ENCODE measurements at regions of chr10 and their contacts with region 1.

Region 1: DNA sequence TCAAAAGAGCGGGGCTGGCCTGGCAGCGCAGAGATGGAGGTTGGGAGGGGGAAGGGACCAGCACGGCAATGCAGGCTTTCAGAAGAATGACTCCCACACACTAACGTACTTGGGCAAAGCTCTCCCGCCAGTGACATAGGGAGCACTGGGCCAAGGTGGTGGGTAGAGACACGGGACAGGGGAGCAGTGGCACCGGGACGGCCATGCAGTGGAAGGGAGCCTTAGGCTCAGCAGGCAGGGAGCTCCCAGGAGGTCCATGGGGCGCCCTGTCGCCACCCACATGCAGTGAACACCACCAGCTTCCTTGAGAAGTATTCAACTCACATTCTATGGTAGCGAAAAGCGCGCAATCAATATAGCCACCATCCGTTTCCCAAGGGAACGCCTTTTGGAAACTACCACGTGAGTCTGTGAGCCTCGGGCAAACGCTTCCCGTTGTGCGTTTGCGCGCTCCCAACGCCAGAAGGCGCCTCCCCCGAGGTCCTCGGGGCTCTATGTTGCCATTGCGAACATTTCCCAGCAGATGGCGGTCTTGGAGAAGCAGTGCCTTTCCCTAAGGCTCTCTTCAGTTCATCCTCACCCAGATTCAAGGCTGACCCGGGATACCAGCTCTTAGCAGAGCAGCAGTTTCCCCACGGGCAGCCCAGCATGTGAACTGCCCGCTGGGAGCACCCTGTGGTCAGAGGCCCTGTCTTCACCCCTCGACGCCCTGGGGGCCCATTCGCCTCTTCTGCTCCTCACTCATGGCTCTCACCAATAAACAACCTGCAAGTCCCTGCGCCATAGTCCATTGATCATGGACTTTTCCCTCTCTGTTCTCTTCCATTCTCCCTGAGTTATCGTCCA is 16.4 kb upstream of the OPALIN start:
- DNase-seq: peak; percentile 86 to 90
- H3K4me3 ChIP-seq: peak overlapping the region in 1 of 3 donors; percentile 32
- H3K27ac ChIP-seq: no peak overlapping the region
- H3K4me1 ChIP-seq: peaks cover 0 to 5% of the 10 kb centered on the region in 2 donors
- H3K27me3 ChIP-seq: no peaks in the 10 kb centered on the region
- CTCF ChIP-seq: peak; percentile 68 to 99 (median 96)
- POLR2A ChIP-seq: no peak

Region 2: DNA sequence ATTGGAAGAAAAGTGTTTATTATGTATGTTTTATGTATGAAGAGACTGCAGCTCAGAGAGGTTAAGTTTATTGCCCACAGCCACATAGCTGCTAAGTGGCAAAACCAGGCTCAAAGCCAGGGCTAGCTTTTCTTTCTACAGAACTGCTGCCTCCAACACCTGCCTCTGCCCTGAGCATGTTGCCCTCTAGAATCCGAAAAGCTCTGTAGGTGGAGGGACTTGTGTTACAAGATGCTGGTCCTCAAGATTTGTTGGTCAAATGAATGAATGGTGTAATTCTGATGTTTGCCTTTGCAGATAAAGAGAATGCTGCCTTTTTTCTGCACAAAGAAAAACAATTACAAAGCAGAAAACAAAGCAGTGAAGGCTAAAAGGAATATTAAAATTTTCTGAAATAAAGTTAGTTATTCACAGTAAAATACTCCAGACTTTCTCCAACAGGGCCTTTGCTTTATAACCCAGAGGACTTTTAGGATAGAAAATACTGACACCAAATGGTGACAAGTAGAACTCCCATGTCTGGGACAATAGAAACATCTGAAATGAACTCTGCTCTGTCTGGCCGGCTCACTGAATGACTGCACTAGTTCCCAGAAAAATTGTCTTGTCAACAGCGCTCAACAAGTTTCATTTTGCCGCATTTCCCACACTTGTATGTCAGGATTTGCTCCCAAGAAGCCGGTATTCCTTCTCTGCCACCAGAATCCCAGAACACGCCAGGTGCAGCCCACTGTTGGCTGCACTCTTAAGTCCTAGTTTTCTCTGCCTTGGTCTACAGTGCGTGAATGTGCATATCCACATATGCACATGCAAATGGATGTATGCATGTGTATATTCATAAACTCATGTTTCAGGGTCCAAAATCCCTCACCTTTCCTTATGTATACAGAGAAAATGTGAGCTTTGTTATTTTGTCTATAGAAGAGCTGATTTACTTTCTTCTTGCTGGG is 82.0 kb before region 1 on chr10:
- intact Hi-C with region 1: no loop called
- DNase-seq: peak in 1 of 2 donors; percentile 31
- H3K4me3 ChIP-seq: no peak overlapping the region
- H3K27ac ChIP-seq: no peak overlapping the region
- H3K4me1 ChIP-seq: peaks cover 0 to 2% of the 10 kb centered on the region in 2 donors
- H3K27me3 ChIP-seq: no peaks in the 10 kb centered on the region
- CTCF ChIP-seq: peak in 5 of 6 experiments; percentile 29 to 78 (median 60)
- POLR2A ChIP-seq: no peak

Region 3: DNA sequence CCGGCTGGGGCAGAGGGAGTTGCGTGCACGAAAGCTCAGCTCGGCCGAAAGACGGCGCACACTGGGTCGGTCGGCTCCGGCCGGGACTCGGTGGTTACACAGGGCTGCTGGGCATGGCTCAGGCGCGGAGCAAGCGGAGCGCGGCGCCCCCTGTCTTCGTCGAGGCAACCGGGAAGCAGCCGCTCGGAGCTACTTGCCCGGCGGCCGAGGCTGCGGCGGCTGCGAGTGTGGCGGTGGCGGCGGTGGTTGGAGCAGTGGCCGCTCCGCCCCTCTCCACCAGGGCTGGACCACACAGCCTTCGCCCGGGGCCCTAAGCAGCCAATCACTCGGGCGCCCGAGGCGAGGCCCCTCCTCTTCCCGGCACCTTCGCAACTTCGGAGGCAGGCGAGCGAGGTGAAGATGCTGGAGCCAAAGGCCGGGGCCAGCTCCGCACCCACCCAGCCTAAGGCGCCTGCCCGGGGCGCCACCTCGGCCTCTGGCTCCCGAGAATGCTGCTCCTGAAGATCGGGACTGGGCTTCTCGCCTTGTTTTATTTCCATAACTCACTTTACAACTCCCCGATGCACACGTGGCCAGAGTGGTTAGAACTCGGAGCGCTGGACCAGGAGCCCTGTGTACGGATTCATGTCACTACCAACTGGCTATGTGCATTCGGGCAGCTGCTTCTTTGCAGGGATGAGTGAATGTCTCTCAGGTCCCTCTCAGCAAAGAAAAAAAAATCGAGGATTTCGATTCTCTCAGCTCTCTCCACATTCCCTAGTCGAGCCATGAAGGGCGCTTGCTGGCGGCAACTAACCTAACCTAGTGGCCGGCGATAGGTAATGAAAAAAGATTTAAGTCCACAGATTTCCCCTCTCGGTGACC is 138.7 kb after region 1 on chr10 and contains the start of gene TLL2:
- intact Hi-C with region 1: loop called (anchors 10 kb)
- DNase-seq: peak; percentile 89 to 91
- H3K4me3 ChIP-seq: peak within 1 kb of the TSS in 1 of 3 donors; percentile 36
- H3K27ac ChIP-seq: peak within 1 kb of the TSS in 1 of 3 donors; percentile 51
- H3K4me1 ChIP-seq: peaks cover 16 to 17% of the 10 kb centered on the region in 2 donors
- H3K27me3 ChIP-seq: no peaks in the 10 kb centered on the region
- CTCF ChIP-seq: peak in 5 of 6 experiments; percentile 12 to 68 (median 52)
- POLR2A ChIP-seq: peak in 1 of 2 donors; percentile 71
- total RNA-seq, gene TLL2: 0.13 to 2.4 (median 1.8) TPM

Region 4: DNA sequence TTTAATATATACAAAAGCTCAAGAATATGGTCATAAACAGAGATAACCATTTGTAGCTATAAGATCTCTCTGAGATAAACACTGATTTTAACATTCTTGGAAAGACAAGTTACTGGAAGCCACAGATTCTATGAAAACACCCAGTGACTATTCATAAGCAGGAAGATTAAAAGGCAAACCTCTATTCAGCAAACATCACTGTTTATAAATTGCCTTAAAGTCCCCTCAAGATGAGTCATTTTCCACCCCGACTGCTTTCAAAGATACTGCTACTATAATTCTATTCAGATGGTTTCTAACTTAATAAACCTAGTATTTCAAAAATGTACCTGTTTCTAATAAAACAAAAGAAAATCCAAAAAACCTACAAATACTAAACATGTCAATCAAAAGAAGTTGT is 190.6 kb after region 1 on chr10:
- intact Hi-C with region 1: no loop called
- DNase-seq: no peak
- H3K4me3 ChIP-seq: no peak overlapping the region
- H3K27ac ChIP-seq: no peak overlapping the region
- H3K4me1 ChIP-seq: peaks cover 0 to 11% of the 10 kb centered on the region in 2 donors
- H3K27me3 ChIP-seq: no peaks in the 10 kb centered on the region
- CTCF ChIP-seq: no peak
- POLR2A ChIP-seq: no peak